Uterus (tissue), 4 donors: ENCODE measurements at regions of chr11 and their contacts with region 1.

Region 1: GRCh38 chr11:62081378-62082291 is 42.2 kb upstream of the INCENP start:
- DNase-seq: peak; percentile 83 to 85
- H3K4me3 ChIP-seq: no peak overlapping the region
- H3K27ac ChIP-seq: no peak overlapping the region
- H3K4me1 ChIP-seq: no peaks in the 10 kb centered on the region
- H3K27me3 ChIP-seq: no peaks in the 10 kb centered on the region
- CTCF ChIP-seq: peak; percentile 90 to 96 (median 93)
- POLR2A ChIP-seq: no peak

Region 2: DNA sequence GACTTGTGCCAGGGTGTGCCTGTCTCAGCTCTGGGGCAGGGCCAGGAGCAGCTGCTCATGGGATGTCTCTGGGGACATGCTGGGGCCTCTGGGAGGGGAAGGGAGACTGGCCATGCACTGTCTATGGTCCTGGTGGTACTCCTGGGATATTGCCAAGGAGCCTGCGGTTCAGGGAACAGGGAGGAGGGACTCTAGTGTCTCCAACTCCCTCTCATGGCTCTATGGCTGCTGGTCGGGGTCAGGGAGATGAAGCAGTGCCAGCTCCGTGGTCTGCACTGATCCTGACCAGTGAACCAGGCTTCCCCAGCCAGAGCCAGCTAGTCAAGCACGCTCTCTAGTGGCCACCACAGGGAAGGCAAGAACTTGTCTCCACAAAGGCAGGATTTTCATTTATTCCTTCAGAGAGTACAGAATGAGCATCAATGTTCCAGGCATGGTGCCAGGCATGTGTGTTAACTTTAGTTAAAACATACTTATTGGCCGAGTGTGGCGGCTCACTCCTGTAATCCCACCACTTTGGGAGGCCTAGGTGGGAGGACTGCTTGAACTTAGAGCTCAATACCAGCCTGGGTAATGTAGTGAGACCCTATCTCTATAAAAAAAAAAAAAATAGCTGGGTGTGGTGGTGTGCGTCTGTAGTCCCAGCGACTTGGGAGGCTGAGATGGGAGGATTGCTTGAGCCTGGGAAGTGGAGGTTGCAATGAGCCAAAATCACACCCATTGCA is 134.0 kb before region 1 on chr11:
- intact Hi-C with region 1: loop called (anchors 10 kb)
- DNase-seq: peak; percentile 94 to 95
- H3K4me3 ChIP-seq: no peak overlapping the region
- H3K27ac ChIP-seq: peak overlapping the region; percentile 40 to 52
- H3K4me1 ChIP-seq: peaks cover 0 to 8% of the 10 kb centered on the region in 2 donors
- H3K27me3 ChIP-seq: no peaks in the 10 kb centered on the region
- CTCF ChIP-seq: peak; percentile 93 to 97 (median 97)
- POLR2A ChIP-seq: peak in 1 of 2 donors; percentile 5